ENCODE measurements at regions of chr2 and their contacts with region 1.

Region 1: DNA sequence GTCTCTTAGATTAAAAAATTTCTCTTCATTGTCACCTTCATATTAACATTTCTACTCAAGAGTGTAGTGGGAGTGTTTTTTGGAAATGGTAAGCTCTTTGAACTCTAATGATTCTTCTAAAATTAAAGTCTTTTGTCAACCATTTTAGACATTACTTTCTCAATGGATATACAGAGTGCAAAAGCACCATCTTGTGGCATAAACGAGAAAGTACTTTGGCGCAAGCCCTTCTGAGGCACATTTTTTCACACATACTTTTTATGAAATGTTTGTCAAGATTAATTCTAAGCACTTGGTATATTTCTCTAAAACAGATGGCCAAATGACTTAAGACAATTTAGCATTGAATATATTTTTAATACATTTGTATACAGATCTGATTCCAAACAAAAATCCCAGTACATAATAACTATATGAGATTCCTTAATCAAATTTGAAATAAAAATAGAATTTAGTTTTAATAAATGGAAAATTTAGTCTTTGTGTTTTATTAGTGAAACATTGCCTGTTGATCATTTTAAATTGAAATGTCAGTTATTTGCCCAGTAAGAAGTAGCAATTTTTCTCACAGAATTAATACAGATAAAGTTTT is 63.3 kb upstream of the GALNT5 start:
- DNase-seq: no peak
- ATAC-seq: no peak
- H3K4me3 ChIP-seq: no peak overlapping the region
- H3K27ac ChIP-seq: no peak overlapping the region
- H3K4me1 ChIP-seq: no peaks in the 10 kb centered on the region
- H3K27me3 ChIP-seq: no peaks in the 10 kb centered on the region

Region 2: DNA sequence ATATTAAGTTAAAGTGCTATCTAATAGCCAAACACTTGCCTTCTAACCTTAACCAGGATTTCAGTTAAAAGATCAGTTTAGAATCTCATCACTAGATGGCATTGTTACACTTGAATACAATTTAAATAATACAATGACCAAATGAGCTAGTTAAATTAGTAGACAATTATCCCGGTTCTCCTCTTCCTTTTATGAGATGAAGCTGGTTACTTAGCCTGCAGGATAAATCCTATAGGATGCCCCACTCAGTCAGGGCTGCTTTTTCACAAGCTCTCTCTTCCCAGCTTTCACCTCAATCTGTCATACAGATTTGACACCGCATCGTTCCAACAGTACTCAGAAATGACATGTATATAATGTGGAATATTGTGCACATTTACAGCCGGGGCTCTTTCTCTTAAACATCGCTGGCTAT is 1816.9 kb before region 1 on chr2:
- intact Hi-C with region 1: loop called in 1 of 2 experiments (anchors 10 kb)
- DNase-seq: no peak
- ATAC-seq: no peak
- H3K4me3 ChIP-seq: no peak overlapping the region
- H3K27ac ChIP-seq: no peak overlapping the region
- H3K4me1 ChIP-seq: no peaks in the 10 kb centered on the region
- H3K27me3 ChIP-seq: no peaks in the 10 kb centered on the region

Region 3: DNA sequence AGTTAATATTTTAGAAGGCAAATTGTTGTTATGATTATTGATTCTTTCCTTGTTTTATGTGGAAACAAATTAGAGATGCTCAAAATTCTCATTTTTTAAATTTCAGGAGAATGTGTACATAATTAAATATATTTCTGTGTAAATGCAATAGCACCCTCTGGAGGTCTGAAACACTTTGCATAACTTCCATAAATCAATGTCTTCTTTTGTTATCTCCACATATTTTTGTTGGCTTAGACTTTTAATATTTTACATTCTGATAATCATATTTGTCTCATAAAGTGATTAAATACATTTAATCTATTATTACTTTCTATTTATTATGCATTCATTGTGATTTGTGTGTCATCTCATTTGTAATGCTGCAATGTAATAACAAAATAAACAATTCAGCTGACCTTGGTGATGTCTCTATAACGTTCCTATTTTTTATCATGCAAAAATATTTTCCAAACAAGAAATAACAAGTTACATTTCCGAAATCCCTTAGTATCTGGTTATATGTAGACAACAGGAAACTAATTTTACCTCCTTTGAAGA is 138.5 kb before region 1 on chr2:
- intact Hi-C with region 1: loop called in 1 of 2 experiments (anchors 10 kb)
- DNase-seq: no peak
- ATAC-seq: no peak
- H3K4me3 ChIP-seq: no peak overlapping the region
- H3K27ac ChIP-seq: no peak overlapping the region
- H3K4me1 ChIP-seq: no peaks in the 10 kb centered on the region
- H3K27me3 ChIP-seq: no peaks in the 10 kb centered on the region

Region 4: GRCh38 chr2:157355618-157356017 is 161.4 kb after region 1 on chr2:
- intact Hi-C with region 1: no loop called
- DNase-seq: no peak
- ATAC-seq: no peak
- H3K4me3 ChIP-seq: no peak overlapping the region
- H3K27ac ChIP-seq: no peak overlapping the region
- H3K4me1 ChIP-seq: no peaks in the 10 kb centered on the region
- H3K27me3 ChIP-seq: no peaks in the 10 kb centered on the region

Measured in aorta (tissue), 5 donors.